ENCODE measurements at regions of chr15 and their contacts with region 1.

Region 1: GRCh38 chr15:101641166-101641764 is 10.9 kb downstream of the TM2D3 start:
- DNase-seq: peak; percentile 56
- ATAC-seq: peak; percentile 89
- H3K4me3 ChIP-seq: 0 out of 2 replicates have a peak overlapping the region, but pooled peaks have one; percentile 8
- H3K27ac ChIP-seq: no peak overlapping the region
- H3K4me1 ChIP-seq: peaks cover 5% of the 10 kb centered on the region; the same call in 1 of the 2 replicates
- H3K27me3 ChIP-seq: no peaks in the 10 kb centered on the region
- CTCF ChIP-seq: peak; percentile 87 to 96 (median 91)
- EP300 ChIP-seq: no peak
- POLR2A ChIP-seq: no peak
- RAD21 ChIP-seq: peak; percentile 96

Region 2: DNA sequence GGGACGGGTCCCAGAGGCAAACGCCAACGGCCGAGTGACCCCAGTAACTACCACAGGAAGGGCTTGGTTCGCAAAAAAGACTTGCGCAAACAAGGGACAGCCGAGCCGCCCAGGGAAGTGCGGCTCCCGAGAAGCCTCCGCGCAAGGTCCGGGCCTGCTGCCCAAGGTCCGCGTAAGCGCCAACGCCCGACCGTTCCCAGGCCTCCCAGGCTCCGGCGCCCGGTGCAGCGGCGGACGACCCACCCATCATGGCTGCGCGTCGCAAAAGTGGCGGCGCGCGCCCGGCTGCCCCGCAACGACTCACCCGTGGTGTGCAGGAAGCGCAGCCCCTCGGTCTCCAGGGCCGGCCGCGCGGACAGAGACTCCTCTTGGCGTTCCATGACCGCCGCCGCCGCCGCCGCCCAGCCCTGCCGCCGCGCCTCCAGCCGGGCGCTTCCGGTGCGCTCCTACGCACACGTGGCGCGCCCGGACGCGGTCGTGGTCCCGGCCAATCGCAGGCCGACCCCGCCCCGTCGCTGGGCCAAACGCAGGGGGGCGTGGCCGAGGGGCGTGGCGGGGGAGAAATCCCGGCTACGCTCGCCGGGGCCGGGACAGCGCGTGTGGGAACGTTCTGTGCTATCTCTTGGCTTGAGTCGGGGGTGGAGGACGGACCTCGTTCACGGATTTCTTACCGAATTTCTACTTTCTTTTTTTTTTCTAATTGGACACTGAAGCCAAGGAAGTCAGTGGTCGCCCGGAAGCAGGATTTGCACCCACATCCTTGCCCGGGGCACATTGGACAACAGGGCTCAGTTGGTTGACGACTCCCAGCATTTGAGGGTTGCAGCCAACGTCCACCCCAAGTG is 364.0 kb before region 1 on chr15 and contains the start of gene SELENOS:
- CTCF ChIA-PET with region 1: interaction called, 12 read pairs
- POLR2A ChIA-PET with region 1: no interaction called
- RAD21 ChIA-PET with region 1: interaction called, 3 read pairs
- SMC1A ChIA-PET with region 1: interaction called, 3 read pairs
- in situ Hi-C with region 1: no loop called
- intact Hi-C with region 1: no loop called
- DNase-seq: no peak
- ATAC-seq: peak; percentile 94
- H3K4me3 ChIP-seq: peak within 1 kb of the TSS; percentile 98
- H3K27ac ChIP-seq: peak within 1 kb of the TSS; percentile 71
- H3K4me1 ChIP-seq: peaks cover 10% of the 10 kb centered on the region
- H3K27me3 ChIP-seq: no peaks in the 10 kb centered on the region
- CTCF ChIP-seq: no peak
- EP300 ChIP-seq: no peak
- POLR2A ChIP-seq: peak; percentile 82
- RAD21 ChIP-seq: no peak
- polyA plus RNA-seq, gene SELENOS: 25.8 to 36.7 TPM

Region 3: GRCh38 chr15:101288908-101289513 is 352.3 kb before region 1 on chr15:
- CTCF ChIA-PET with region 1: interaction called, 39 read pairs
- POLR2A ChIA-PET with region 1: interaction called, 5 read pairs
- RAD21 ChIA-PET with region 1: interaction called, 23 read pairs
- SMC1A ChIA-PET with region 1: interaction called, 14 read pairs
- in situ Hi-C with region 1: loop called (anchors 5 kb)
- intact Hi-C with region 1: no loop called
- DNase-seq: no peak
- ATAC-seq: peak; percentile 48
- H3K4me3 ChIP-seq: no peak overlapping the region
- H3K27ac ChIP-seq: no peak overlapping the region
- H3K4me1 ChIP-seq: peaks cover 4% of the 10 kb centered on the region
- H3K27me3 ChIP-seq: no peaks in the 10 kb centered on the region
- CTCF ChIP-seq: peak; percentile 52 to 58 (median 53)
- EP300 ChIP-seq: no peak
- POLR2A ChIP-seq: no peak
- RAD21 ChIP-seq: peak; percentile 45

Region 4: GRCh38 chr15:101294731-101295606 is 346.3 kb before region 1 on chr15 and contains the start of gene SNRPA1:
- CTCF ChIA-PET with region 1: interaction called, 93 read pairs
- POLR2A ChIA-PET with region 1: interaction called, 5 read pairs
- RAD21 ChIA-PET with region 1: interaction called, 23 read pairs
- SMC1A ChIA-PET with region 1: interaction called, 30 read pairs
- in situ Hi-C with region 1: loop called (anchors 5 kb)
- intact Hi-C with region 1: loop called (anchors 1 kb)
- DNase-seq: peak; percentile 68
- ATAC-seq: peak; percentile 88
- H3K4me3 ChIP-seq: peak within 1 kb of the TSS; percentile 87
- H3K27ac ChIP-seq: peak within 1 kb of the TSS; percentile 95
- H3K4me1 ChIP-seq: peaks cover 8% of the 10 kb centered on the region
- H3K27me3 ChIP-seq: no peaks in the 10 kb centered on the region
- CTCF ChIP-seq: no peak
- EP300 ChIP-seq: 0 out of 4 replicates have a peak, but pooled peaks of 1 of the 2 experiments have one; percentile 7
- POLR2A ChIP-seq: peak; percentile 95
- RAD21 ChIP-seq: no peak
- polyA plus RNA-seq, gene SNRPA1: 174 to 238 TPM

Region 5: GRCh38 chr15:101305820-101306255 is 335.4 kb before region 1 on chr15:
- CTCF ChIA-PET with region 1: interaction called, 93 read pairs
- POLR2A ChIA-PET with region 1: no interaction called
- RAD21 ChIA-PET with region 1: interaction called, 5 read pairs
- SMC1A ChIA-PET with region 1: interaction called, 27 read pairs
- in situ Hi-C with region 1: no loop called
- intact Hi-C with region 1: no loop called
- DNase-seq: no peak
- ATAC-seq: no peak
- H3K4me3 ChIP-seq: no peak overlapping the region
- H3K27ac ChIP-seq: no peak overlapping the region
- H3K4me1 ChIP-seq: no peaks in the 10 kb centered on the region
- H3K27me3 ChIP-seq: peaks cover 0 to 1% of the 10 kb centered on the region in 2 experiments; a peak in 2 of 4 replicates
- CTCF ChIP-seq: no peak
- EP300 ChIP-seq: no peak
- POLR2A ChIP-seq: no peak
- RAD21 ChIP-seq: no peak

Region 6: DNA sequence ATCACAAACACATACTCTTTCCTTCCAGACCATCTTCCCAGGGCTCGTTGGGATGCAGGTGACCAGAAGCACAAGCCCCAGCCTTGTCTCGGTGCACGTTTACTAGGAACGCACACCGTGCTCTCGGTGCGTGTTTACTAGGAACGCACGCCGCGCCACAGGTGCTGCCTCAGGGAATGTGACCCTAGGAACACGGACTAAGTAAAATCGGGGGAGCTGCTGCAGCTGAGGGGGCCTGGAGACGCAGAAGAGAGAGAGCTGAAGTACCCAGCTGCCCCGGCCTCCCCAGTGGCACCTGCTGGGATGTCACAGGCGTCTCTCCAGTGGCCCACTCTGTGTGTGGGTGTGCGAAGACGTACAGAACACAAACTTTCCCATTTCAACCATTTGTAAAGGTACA is 255.3 kb before region 1 on chr15:
- CTCF ChIA-PET with region 1: no interaction called
- POLR2A ChIA-PET with region 1: no interaction called
- RAD21 ChIA-PET with region 1: no interaction called
- SMC1A ChIA-PET with region 1: no interaction called
- in situ Hi-C with region 1: no loop called
- intact Hi-C with region 1: no loop called
- DNase-seq: no peak
- ATAC-seq: no peak
- H3K4me3 ChIP-seq: no peak overlapping the region
- H3K27ac ChIP-seq: no peak overlapping the region
- H3K4me1 ChIP-seq: no peaks in the 10 kb centered on the region
- H3K27me3 ChIP-seq: no peaks in the 10 kb centered on the region
- CTCF ChIP-seq: no peak
- EP300 ChIP-seq: no peak
- POLR2A ChIP-seq: no peak
- RAD21 ChIP-seq: no peak

Region 7: GRCh38 chr15:101620671-101621070 is 20.6 kb before region 1 on chr15:
- CTCF ChIA-PET with region 1: interaction called, 10 read pairs
- POLR2A ChIA-PET with region 1: interaction called, 3 read pairs
- RAD21 ChIA-PET with region 1: no interaction called
- SMC1A ChIA-PET with region 1: interaction called, 3 read pairs
- in situ Hi-C with region 1: no loop called
- intact Hi-C with region 1: no loop called
- DNase-seq: peak; percentile 9
- ATAC-seq: no peak
- H3K4me3 ChIP-seq: peak overlapping the region; percentile 8; the same call in 1 of the 2 replicates
- H3K27ac ChIP-seq: no peak overlapping the region
- H3K4me1 ChIP-seq: peaks cover 15% of the 10 kb centered on the region
- H3K27me3 ChIP-seq: no peaks in the 10 kb centered on the region
- CTCF ChIP-seq: no peak
- EP300 ChIP-seq: no peak
- POLR2A ChIP-seq: no peak
- RAD21 ChIP-seq: no peak

Region 8: GRCh38 chr15:101652098-101652782 is 11.0 kb after region 1 on chr15 and contains the start of gene TM2D3:
- CTCF ChIA-PET with region 1: interaction called, 57 read pairs
- POLR2A ChIA-PET with region 1: interaction called, 3 read pairs
- RAD21 ChIA-PET with region 1: interaction called, 8 read pairs
- SMC1A ChIA-PET with region 1: interaction called, 6 read pairs
- in situ Hi-C with region 1: no loop called
- intact Hi-C with region 1: no loop called
- DNase-seq: peak; percentile 65
- ATAC-seq: peak; percentile 94
- H3K4me3 ChIP-seq: peak within 1 kb of the TSS; percentile 85
- H3K27ac ChIP-seq: peak within 1 kb of the TSS; percentile 87
- H3K4me1 ChIP-seq: peaks cover 20% of the 10 kb centered on the region
- H3K27me3 ChIP-seq: no peaks in the 10 kb centered on the region
- CTCF ChIP-seq: peak; percentile 58 to 69 (median 63); a peak in 5 of 6 replicates
- EP300 ChIP-seq: peak in 1 of 2 experiments; percentile 27; a peak in 2 of 4 replicates
- POLR2A ChIP-seq: peak; percentile 98
- RAD21 ChIP-seq: peak; percentile 12; the same call in 1 of the 2 replicates
- polyA plus RNA-seq, gene TM2D3: 48.7 to 71.8 TPM